Vagina (tissue), 2 donors: ENCODE measurements at regions of chr12 and their contacts with region 1.

Region 1: DNA sequence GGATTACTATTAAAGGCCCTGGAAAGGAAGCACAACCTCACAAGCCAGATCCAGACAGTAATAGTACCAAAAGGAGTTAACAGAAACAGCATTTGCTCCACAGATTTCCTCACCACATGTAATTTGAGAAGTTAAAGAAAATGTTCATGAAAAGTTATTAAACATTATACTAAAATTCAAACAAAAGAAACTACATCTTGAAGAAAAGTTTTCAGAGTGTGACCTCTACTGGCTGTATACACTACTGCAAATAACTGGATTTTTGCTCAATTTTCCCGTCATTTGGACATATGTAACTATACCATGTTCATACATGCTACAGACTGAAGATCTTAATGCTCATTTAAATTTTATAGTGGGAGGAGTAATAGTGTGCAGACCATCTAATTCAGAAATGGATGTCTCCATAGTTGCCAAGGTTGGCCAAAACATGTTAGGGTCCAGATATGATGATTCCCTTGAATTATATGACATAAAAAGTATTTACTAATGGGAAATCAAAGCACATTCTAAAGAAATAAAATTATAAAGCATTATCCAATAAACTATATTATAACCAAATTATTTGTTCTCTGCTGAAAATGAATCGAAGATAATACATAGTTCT is 5.6 kb downstream of the KRR1 start:
- DNase-seq: no peak
- H3K4me3 ChIP-seq: no peak overlapping the region
- H3K27ac ChIP-seq: no peak overlapping the region
- H3K4me1 ChIP-seq: peaks cover 23% of the 10 kb centered on the region
- H3K27me3 ChIP-seq: no peaks in the 10 kb centered on the region
- CTCF ChIP-seq: peak in 2 of 3 experiments; percentile 25 to 38
- POLR2A ChIP-seq: no peak

Region 2: GRCh38 chr12:75334384-75335030 is 171.3 kb before region 1 on chr12 and contains the start of gene GLIPR1L1:
- intact Hi-C with region 1: loop called (anchors 10 kb)
- DNase-seq: peak in 1 of 2 donors; percentile 91
- H3K4me3 ChIP-seq: peak within 1 kb of the TSS; percentile 39 to 43
- H3K27ac ChIP-seq: peak within 1 kb of the TSS; percentile 33
- H3K4me1 ChIP-seq: peaks cover 11% of the 10 kb centered on the region
- H3K27me3 ChIP-seq: no peaks in the 10 kb centered on the region
- CTCF ChIP-seq: peak; percentile 66 to 94 (median 88)
- POLR2A ChIP-seq: no peak
- total RNA-seq, gene GLIPR1L1: not detected